Activated B cell treated with CpG ODN at 0.5 μM for 24 hours (primary cell): ENCODE measurements at regions of chr1 and their contacts with region 1.

Region 1: DNA sequence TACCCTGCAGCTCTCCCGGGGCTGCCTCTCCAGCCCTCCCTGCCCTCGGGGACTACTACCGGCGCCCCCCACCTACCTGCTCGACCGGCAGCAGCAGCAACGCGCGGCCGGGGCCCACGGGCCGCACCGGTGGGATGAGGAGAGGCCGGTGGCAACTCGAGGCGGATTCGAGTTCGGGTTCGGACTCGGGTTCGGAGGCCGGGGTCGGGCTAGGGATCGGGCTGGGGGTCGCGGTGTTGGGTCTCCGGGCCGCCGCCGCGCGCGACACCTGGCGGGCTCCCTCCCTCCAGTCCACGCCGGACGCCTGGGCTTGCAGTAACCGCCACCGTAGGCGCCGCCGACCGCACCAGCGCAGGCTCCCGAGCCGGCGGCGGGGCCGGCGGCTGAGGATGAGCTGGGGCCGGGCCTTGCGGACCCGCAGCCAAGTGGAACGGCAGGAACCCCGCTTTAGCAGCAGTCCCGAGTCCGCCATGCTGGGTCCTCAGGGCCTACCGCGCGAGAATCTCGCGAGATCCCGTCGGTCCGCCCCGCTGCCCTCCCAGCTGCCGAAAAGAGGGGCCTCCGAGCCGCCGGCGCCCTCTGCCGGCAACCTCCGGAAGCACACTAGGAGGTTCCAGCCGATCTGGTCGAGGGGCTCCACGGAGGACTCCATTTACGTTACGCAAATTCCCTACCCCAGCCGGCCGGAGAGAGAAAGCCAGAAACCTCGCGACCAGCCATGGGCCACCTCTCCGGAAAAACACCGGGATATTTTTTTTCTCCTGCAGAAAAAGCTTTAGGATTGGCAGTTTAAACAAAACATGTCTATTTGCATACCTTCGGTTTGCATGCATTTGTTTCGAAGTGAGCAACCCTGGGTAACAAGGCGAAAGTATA is at the start of gene NOL9:
- DNase-seq: peak; percentile 98
- ATAC-seq: peak; percentile 98
- H3K4me3 Mint-ChIP-seq: peak within 1 kb of the TSS; percentile 85
- H3K27ac Mint-ChIP-seq: peak within 1 kb of the TSS; percentile 84
- H3K4me1 Mint-ChIP-seq: peaks cover 21% of the 10 kb centered on the region
- H3K27me3 Mint-ChIP-seq: no peaks in the 10 kb centered on the region
- CTCF ChIP-seq: peak; percentile 62
- total RNA-seq, gene NOL9: 43.6 and 58.6 TPM in 2 replicates

Region 2: GRCh38 chr1:6489799-6490180 is 64.5 kb before region 1 on chr1:
- CTCF ChIA-PET with region 1: interaction called, 4 read pairs
- POLR2A ChIA-PET with region 1: interaction called, 3 read pairs
- intact Hi-C with region 1: loop called (anchors 1 kb)
- DNase-seq: peak; percentile 75
- ATAC-seq: peak; percentile 75
- H3K4me3 Mint-ChIP-seq: peak overlapping the region; percentile 77
- H3K27ac Mint-ChIP-seq: no peak overlapping the region
- H3K4me1 Mint-ChIP-seq: peaks cover 13% of the 10 kb centered on the region
- H3K27me3 Mint-ChIP-seq: peaks cover 9% of the 10 kb centered on the region
- CTCF ChIP-seq: peak; percentile 67

Region 3: GRCh38 chr1:6519935-6520671 is 34.2 kb before region 1 on chr1:
- CTCF ChIA-PET with region 1: no interaction called
- POLR2A ChIA-PET with region 1: no interaction called
- intact Hi-C with region 1: no loop called
- DNase-seq: no peak
- ATAC-seq: no peak
- H3K4me3 Mint-ChIP-seq: no peak overlapping the region
- H3K27ac Mint-ChIP-seq: no peak overlapping the region
- H3K4me1 Mint-ChIP-seq: no peaks in the 10 kb centered on the region
- H3K27me3 Mint-ChIP-seq: no peaks in the 10 kb centered on the region
- CTCF ChIP-seq: no peak

Region 4: DNA sequence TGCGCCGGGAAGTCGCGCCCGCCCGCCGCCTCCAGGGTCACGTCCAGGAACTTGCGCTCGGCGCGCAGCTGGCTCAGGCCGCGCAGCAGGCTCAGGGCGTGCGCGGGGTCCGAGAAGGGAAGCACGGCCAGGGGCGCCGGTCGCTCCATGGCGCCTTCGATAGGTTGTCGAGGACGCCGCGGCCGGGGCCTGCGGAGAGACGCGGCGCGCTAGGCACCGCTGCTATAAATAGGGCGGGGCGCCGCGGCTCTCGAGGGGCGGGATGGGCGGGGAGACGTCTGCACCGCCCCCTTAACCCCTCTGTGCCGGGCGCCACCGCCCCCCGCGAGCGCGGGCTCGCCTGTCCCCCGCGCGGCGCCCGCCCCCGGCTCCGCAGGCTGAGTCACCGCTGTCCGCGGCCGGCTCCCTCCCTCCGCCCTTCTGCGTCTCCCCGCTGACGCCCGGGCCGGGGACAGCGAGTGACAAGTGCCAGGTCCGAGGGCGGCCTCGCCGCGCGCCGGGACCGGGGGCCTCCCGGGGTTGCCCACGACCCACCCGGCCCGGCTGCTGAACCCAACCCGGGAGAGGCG is 48.5 kb after region 1 on chr1 and contains the start of gene KLHL21:
- CTCF ChIA-PET with region 1: interaction called, 11 read pairs
- POLR2A ChIA-PET with region 1: interaction called, 38 read pairs
- intact Hi-C with region 1: loop called (anchors 1 kb)
- DNase-seq: peak; percentile 86
- ATAC-seq: peak; percentile 70
- H3K4me3 Mint-ChIP-seq: peak within 1 kb of the TSS; percentile 91
- H3K27ac Mint-ChIP-seq: peak within 1 kb of the TSS; percentile 96
- H3K4me1 Mint-ChIP-seq: peaks cover 40% of the 10 kb centered on the region
- H3K27me3 Mint-ChIP-seq: no peaks in the 10 kb centered on the region
- CTCF ChIP-seq: no peak
- total RNA-seq, gene KLHL21: 14.6 and 15.9 TPM in 2 replicates

Region 5: GRCh38 chr1:6646499-6647148 is 92.4 kb after region 1 on chr1:
- CTCF ChIA-PET with region 1: interaction called, 11 read pairs
- POLR2A ChIA-PET with region 1: no interaction called
- intact Hi-C with region 1: loop called (anchors 1 kb)
- DNase-seq: no peak
- ATAC-seq: peak; percentile 49
- H3K4me3 Mint-ChIP-seq: no peak overlapping the region
- H3K27ac Mint-ChIP-seq: no peak overlapping the region
- H3K4me1 Mint-ChIP-seq: peaks cover 2% of the 10 kb centered on the region
- H3K27me3 Mint-ChIP-seq: no peaks in the 10 kb centered on the region
- CTCF ChIP-seq: peak; percentile 26